CD4-positive, alpha-beta memory T cell (primary cell): ENCODE measurements at regions of chr17 and their contacts with region 1.

Region 1: GRCh38 chr17:59427425-59427921 is 96.0 kb downstream of the YPEL2 start:
- DNase-seq: no peak
- H3K4me3 ChIP-seq: no peak overlapping the region
- H3K4me3 Mint-ChIP-seq: no peak overlapping the region
- H3K27ac ChIP-seq: no peak overlapping the region
- H3K27ac Mint-ChIP-seq: peak overlapping the region in 1 of 7 donors; percentile 2
- H3K4me1 ChIP-seq: peaks cover 6% of the 10 kb centered on the region
- H3K4me1 Mint-ChIP-seq: peaks cover 0 to 7% (median 4%) of the 10 kb centered on the region in 4 donors
- H3K27me3 ChIP-seq: no peaks in the 10 kb centered on the region
- H3K27me3 Mint-ChIP-seq: peaks cover 1 to 4% of the 10 kb centered on the region in 2 donors

Region 2: DNA sequence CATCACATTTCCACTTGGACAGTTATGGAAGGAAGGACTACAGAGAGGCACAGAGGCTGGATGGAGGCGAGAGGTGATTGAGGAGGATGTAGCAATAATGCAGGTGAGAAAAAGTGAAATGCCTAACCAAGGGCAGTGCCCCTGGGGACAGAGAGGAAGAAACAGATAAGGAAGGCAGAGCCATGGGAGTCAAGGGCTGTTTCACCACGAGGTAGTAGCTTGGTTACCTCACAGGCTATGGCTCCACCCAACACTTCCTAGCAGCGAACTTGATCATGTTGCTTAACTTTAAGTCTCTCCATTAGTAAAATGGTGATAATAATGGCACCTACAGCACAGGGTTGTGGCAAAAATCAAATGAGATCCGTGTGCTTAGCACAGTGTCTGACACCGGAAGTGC is 12.1 kb before region 1 on chr17:
- CTCF ChIA-PET with region 1: interaction called, 10 read pairs
- POLR2A ChIA-PET with region 1: no interaction called
- intact Hi-C with region 1: no loop called
- DNase-seq: no peak
- H3K4me3 ChIP-seq: no peak overlapping the region
- H3K4me3 Mint-ChIP-seq: no peak overlapping the region
- H3K27ac ChIP-seq: no peak overlapping the region
- H3K27ac Mint-ChIP-seq: peak overlapping the region in 2 of 7 donors; percentile 6 to 15
- H3K4me1 ChIP-seq: no peaks in the 10 kb centered on the region
- H3K4me1 Mint-ChIP-seq: peaks cover 0 to 8% (median 3%) of the 10 kb centered on the region in 4 donors
- H3K27me3 ChIP-seq: no peaks in the 10 kb centered on the region
- H3K27me3 Mint-ChIP-seq: peaks cover 0 to 1% of the 10 kb centered on the region in 2 donors

Region 3: DNA sequence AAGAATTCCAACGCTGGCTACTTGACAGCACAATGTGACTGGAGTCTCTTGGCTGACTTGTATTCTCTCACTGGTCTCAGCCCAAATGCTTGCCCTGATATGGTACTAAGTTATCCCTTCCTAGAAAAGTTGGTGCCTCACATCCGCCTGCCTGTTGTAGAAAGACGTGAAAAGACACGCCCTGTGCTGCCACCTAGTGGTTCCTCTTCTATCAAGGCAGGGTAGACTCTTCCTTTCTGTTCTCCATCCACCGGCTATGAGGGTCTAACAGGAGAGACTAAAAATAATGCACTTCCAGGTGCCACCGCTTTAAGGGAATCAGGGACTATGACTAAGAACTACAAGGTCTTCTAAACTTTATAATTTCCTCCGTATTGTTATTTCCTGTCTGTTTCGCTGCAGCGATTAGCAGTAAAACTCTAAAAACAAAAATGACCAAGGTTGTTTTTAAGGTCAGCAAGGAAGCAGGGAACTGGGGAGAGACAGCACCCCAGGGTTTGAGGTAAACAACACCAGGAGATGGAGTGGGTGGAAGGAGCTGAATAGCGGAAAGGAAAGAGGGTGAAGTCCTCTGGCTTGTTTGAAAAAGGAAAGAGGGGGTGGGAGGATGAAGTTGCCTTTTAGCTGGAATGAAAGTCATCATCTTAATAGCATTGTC is 13.4 kb after region 1 on chr17:
- CTCF ChIA-PET with region 1: interaction called, 30 read pairs
- POLR2A ChIA-PET with region 1: no interaction called
- intact Hi-C with region 1: loop called (anchors 1 kb)
- DNase-seq: peak; percentile 78 to 83 (median 79)
- H3K4me3 ChIP-seq: no peak overlapping the region
- H3K4me3 Mint-ChIP-seq: peak overlapping the region; percentile 3 to 70 (median 19)
- H3K27ac ChIP-seq: no peak overlapping the region
- H3K27ac Mint-ChIP-seq: peak overlapping the region in 2 of 7 donors; percentile 25 to 46
- H3K4me1 ChIP-seq: peaks cover 20% of the 10 kb centered on the region
- H3K4me1 Mint-ChIP-seq: peaks cover 8 to 23% (median 17%) of the 10 kb centered on the region in 4 donors
- H3K27me3 ChIP-seq: no peaks in the 10 kb centered on the region
- H3K27me3 Mint-ChIP-seq: peaks cover 2 to 4% of the 10 kb centered on the region in 2 donors